Endothelial cell of umbilical vein (primary cell): ENCODE measurements at regions of chr18 and their contacts with region 1.

Region 1: GRCh38 chr18:74551936-74552555 is 17.7 kb downstream of the CNDP1 start:
- DNase-seq: peak; percentile 77
- H3K4me3 ChIP-seq: no peak overlapping the region
- H3K27ac ChIP-seq: no peak overlapping the region
- H3K4me1 ChIP-seq: no peaks in the 10 kb centered on the region
- H3K27me3 ChIP-seq: peaks cover 0 to 4% of the 10 kb centered on the region in 2 experiments
- CTCF ChIP-seq: peak; percentile 70 to 83
- POLR2A ChIP-seq: no peak

Region 2: GRCh38 chr18:72762515-72763122 is 1789.4 kb before region 1 on chr18:
- CTCF ChIA-PET with region 1: interaction called, 31 read pairs
- POLR2A ChIA-PET with region 1: no interaction called
- dilution Hi-C with region 1: no loop called
- intact Hi-C with region 1: no loop called
- DNase-seq: peak; percentile 36
- H3K4me3 ChIP-seq: no peak overlapping the region
- H3K27ac ChIP-seq: no peak overlapping the region
- H3K4me1 ChIP-seq: no peaks in the 10 kb centered on the region
- H3K27me3 ChIP-seq: no peaks in the 10 kb centered on the region
- CTCF ChIP-seq: peak; percentile 33 to 42
- POLR2A ChIP-seq: no peak

Region 3: DNA sequence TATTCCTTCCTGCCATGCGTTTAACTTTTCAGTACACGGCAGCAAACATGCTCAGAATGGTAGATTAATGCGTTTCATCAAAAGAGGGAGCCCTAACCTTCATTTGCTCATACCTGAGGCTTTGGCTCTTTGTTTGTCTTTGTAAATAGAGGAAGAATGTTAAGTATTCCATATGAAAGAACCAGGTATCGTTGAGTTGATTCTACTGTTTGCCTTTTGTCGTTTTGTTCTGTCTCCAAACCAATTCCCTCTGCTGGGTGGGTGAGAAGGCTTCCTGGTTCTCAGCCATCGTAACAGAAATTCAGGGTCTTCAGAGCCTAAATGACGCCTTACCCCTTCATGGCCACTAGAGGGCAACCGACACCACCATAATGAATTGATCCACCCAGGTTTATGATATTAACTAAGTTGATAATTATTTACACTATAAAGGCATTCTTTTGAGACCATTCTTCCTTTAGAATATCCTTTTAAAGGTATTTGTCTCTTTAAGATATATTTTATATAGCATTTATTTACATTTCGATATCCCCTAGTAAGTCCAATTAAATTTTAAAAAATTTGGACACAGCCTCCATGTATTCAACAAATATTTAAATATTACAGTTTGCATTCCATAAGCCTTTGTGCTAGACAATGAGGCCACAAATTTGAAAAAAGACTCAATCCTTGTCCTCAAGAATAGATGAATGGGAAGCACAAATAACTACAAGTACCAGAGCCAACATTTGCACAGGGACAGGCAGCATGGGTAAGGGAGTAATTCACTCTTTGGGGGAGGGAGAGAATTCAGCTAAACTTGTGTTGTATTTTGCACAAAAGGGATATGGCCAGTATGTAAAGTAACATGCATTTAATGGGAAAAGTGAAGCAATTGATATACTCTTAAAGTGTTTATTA is 355.6 kb before region 1 on chr18:
- CTCF ChIA-PET with region 1: interaction called, 28 read pairs
- POLR2A ChIA-PET with region 1: no interaction called
- dilution Hi-C with region 1: no loop called
- intact Hi-C with region 1: loop called (anchors 1 kb)
- DNase-seq: peak; percentile 78
- H3K4me3 ChIP-seq: peak overlapping the region in 2 of 3 experiments; percentile 14 to 48
- H3K27ac ChIP-seq: no peak overlapping the region
- H3K4me1 ChIP-seq: no peaks in the 10 kb centered on the region
- H3K27me3 ChIP-seq: peaks cover 0 to 3% of the 10 kb centered on the region in 2 experiments
- CTCF ChIP-seq: peak; percentile 62 to 86
- POLR2A ChIP-seq: no peak

Region 4: DNA sequence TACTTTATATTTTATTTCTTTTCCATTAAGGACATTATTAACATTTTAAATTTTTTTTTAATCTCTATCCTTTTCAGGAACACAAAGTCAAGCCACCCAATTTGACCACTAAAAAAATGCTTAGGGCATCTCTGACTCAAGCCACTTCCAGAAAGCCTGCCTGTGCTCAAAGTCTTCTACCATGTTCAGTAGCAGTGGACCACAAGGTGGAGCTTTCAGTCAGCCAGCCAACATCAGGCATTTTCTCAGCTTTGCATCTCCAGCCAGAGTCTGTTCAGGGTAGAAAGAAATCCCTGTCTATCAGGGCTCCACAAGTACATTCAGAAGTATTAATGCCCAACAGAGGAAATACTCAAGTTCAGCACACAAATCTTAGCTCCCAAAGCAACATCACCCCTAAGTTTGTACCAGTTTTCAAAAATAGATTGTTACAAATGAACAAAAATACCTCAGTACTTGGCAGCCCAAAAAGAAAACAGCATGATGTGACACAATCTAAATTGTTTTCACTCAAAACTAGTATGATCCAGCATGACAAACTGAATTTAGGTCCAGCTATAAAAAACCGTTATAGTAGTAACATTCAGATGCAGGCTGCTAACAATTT is 198.8 kb before region 1 on chr18:
- CTCF ChIA-PET with region 1: interaction called, 106 read pairs
- POLR2A ChIA-PET with region 1: no interaction called
- dilution Hi-C with region 1: no loop called
- intact Hi-C with region 1: loop called (anchors 1 kb)
- DNase-seq: peak; percentile 53
- H3K4me3 ChIP-seq: no peak overlapping the region
- H3K27ac ChIP-seq: no peak overlapping the region
- H3K4me1 ChIP-seq: no peaks in the 10 kb centered on the region
- H3K27me3 ChIP-seq: peaks cover 1 to 15% of the 10 kb centered on the region in 2 experiments
- CTCF ChIP-seq: peak; percentile 40 to 62
- POLR2A ChIP-seq: no peak

Region 5: GRCh38 chr18:74450626-74451025 is 101.4 kb before region 1 on chr18:
- CTCF ChIA-PET with region 1: no interaction called
- POLR2A ChIA-PET with region 1: no interaction called
- dilution Hi-C with region 1: no loop called
- intact Hi-C with region 1: no loop called
- DNase-seq: no peak
- H3K4me3 ChIP-seq: no peak overlapping the region
- H3K27ac ChIP-seq: no peak overlapping the region
- H3K4me1 ChIP-seq: no peaks in the 10 kb centered on the region
- H3K27me3 ChIP-seq: peaks cover 9 to 20% of the 10 kb centered on the region in 2 experiments
- CTCF ChIP-seq: no peak
- POLR2A ChIP-seq: no peak

Region 6: GRCh38 chr18:74541703-74542555 is 10.1 kb before region 1 on chr18:
- CTCF ChIA-PET with region 1: interaction called, 10 read pairs
- POLR2A ChIA-PET with region 1: no interaction called
- dilution Hi-C with region 1: no loop called
- intact Hi-C with region 1: no loop called
- DNase-seq: no peak
- H3K4me3 ChIP-seq: no peak overlapping the region
- H3K27ac ChIP-seq: no peak overlapping the region
- H3K4me1 ChIP-seq: peaks cover 3% of the 10 kb centered on the region
- H3K27me3 ChIP-seq: no peaks in the 10 kb centered on the region
- CTCF ChIP-seq: no peak
- POLR2A ChIP-seq: no peak

Region 7: GRCh38 chr18:74567822-74568221 is 15.8 kb after region 1 on chr18:
- CTCF ChIA-PET with region 1: interaction called, 10 read pairs
- POLR2A ChIA-PET with region 1: no interaction called
- dilution Hi-C with region 1: no loop called
- intact Hi-C with region 1: no loop called
- DNase-seq: no peak
- H3K4me3 ChIP-seq: no peak overlapping the region
- H3K27ac ChIP-seq: no peak overlapping the region
- H3K4me1 ChIP-seq: no peaks in the 10 kb centered on the region
- H3K27me3 ChIP-seq: no peaks in the 10 kb centered on the region
- CTCF ChIP-seq: no peak
- POLR2A ChIP-seq: no peak

Region 8: DNA sequence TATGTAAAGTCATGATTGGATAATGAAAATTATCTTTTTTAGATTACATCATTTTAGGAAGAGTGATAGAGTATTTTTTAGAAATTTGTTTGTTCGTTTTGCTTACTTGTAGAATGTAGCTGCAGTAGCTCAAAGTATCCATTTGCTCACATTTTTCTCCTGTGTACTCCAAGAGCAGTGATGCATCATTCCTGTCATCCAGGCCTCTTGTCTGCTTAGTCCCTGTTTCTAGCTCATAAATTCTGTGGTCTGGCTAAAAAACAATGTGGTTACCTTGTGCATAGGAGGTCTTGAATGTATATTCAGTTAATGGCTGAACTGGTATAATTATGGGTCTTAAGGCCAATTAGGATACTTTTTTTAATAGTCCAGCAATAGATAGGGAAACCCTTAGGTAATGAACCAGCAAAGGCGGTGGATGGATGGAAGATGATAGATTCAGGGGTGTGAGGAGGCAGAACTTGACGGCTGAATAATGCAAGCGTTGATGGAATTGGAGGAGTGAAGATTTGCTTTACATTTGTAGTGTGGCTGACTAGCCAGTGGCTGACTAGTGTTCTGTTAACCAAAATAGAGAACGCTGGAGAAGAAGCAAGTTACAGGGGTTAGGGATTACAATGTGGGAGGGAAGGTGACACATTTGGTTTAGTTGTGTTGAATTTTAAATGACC is 190.7 kb after region 1 on chr18:
- CTCF ChIA-PET with region 1: no interaction called
- POLR2A ChIA-PET with region 1: no interaction called
- dilution Hi-C with region 1: no loop called
- intact Hi-C with region 1: no loop called
- DNase-seq: no peak
- H3K4me3 ChIP-seq: no peak overlapping the region
- H3K27ac ChIP-seq: no peak overlapping the region
- H3K4me1 ChIP-seq: peaks cover 13% of the 10 kb centered on the region
- H3K27me3 ChIP-seq: no peaks in the 10 kb centered on the region
- CTCF ChIP-seq: no peak
- POLR2A ChIP-seq: no peak

Region 9: GRCh38 chr18:76349067-76349715 is 1797.1 kb after region 1 on chr18:
- CTCF ChIA-PET with region 1: interaction called, 7 read pairs
- POLR2A ChIA-PET with region 1: no interaction called
- dilution Hi-C with region 1: no loop called
- intact Hi-C with region 1: loop called (anchors 1 kb)
- DNase-seq: peak; percentile 59
- H3K4me3 ChIP-seq: no peak overlapping the region
- H3K27ac ChIP-seq: no peak overlapping the region
- H3K4me1 ChIP-seq: no peaks in the 10 kb centered on the region
- H3K27me3 ChIP-seq: no peaks in the 10 kb centered on the region
- CTCF ChIP-seq: peak; percentile 79 to 83
- POLR2A ChIP-seq: no peak